ENCODE measurements at regions of chr1 and their contacts with region 1.

Region 1: GRCh38 chr1:40951943-40952743 is 27.4 kb upstream of the CTPS1 start:
- DNase-seq: no peak
- H3K4me3 ChIP-seq: no peak overlapping the region
- H3K27me3 ChIP-seq: no peaks in the 10 kb centered on the region
- CTCF ChIP-seq: peak; percentile 96

Region 2: GRCh38 chr1:40774266-40774998 is 177.7 kb before region 1 on chr1:
- CTCF ChIA-PET with region 1: interaction called, 22 read pairs
- POLR2A ChIA-PET with region 1: no interaction called
- DNase-seq: no peak
- H3K4me3 ChIP-seq: no peak overlapping the region
- H3K27me3 ChIP-seq: no peaks in the 10 kb centered on the region
- CTCF ChIP-seq: peak; percentile 79

Region 3: DNA sequence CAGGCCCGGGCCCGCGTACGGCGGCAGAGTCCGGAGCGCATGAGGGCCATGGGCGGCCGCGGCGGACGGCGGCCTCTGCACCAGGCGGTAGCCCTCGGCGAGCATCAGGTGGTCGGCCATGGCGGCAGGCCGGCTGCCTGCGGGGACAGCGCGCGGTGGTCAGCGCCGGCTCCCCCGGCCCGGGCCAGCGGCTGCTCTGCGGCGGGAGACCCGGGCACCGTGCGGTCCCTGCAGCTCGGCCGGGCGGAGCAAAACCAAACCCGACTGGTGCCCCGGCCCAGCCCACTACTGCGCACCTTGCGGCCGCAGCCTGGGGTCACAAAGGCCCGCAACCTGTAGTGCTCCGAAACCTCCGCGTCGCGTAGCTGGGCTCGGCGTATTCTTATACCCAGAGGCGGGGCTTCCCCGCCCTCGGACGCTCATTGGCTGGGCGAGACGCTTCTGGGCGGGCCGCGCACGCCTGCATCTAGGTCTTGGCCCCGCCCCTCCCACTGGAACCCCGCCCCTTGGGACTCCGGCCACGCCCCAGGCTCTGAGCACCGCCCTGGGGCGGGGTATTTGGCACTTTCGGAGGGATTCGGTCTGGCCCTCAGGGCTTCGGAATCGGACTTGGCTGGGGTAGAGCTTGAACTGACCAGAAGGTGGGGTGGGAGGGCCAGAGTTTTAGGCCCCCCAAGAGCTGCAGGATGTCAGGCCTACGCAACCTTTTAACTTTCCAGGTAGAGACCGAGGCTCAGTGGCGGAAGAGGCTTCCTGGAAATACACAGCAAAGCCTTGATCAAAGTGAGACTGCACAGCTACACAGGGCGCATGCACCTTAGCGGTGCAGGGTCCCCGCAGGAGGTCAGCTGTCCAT is 89.9 kb before region 1 on chr1 and contains the start of gene CITED4:
- CTCF ChIA-PET with region 1: interaction called, 476 read pairs
- POLR2A ChIA-PET with region 1: no interaction called
- DNase-seq: peak; percentile 39
- H3K4me3 ChIP-seq: peak within 1 kb of the TSS; percentile 54
- H3K27me3 ChIP-seq: no peaks in the 10 kb centered on the region; the same call in 1 of the 2 replicates
- CTCF ChIP-seq: 0 out of 2 replicates have a peak, but pooled peaks have one; percentile 17
- polyA plus RNA-seq, gene CITED4: 0.67 and 0.80 TPM in 2 replicates

Region 4: GRCh38 chr1:40965529-40965928 is 13.4 kb after region 1 on chr1:
- CTCF ChIA-PET with region 1: interaction called, 80 read pairs
- POLR2A ChIA-PET with region 1: interaction called, 4 read pairs
- DNase-seq: no peak
- H3K4me3 ChIP-seq: no peak overlapping the region
- H3K27me3 ChIP-seq: no peaks in the 10 kb centered on the region
- CTCF ChIP-seq: no peak

Region 5: DNA sequence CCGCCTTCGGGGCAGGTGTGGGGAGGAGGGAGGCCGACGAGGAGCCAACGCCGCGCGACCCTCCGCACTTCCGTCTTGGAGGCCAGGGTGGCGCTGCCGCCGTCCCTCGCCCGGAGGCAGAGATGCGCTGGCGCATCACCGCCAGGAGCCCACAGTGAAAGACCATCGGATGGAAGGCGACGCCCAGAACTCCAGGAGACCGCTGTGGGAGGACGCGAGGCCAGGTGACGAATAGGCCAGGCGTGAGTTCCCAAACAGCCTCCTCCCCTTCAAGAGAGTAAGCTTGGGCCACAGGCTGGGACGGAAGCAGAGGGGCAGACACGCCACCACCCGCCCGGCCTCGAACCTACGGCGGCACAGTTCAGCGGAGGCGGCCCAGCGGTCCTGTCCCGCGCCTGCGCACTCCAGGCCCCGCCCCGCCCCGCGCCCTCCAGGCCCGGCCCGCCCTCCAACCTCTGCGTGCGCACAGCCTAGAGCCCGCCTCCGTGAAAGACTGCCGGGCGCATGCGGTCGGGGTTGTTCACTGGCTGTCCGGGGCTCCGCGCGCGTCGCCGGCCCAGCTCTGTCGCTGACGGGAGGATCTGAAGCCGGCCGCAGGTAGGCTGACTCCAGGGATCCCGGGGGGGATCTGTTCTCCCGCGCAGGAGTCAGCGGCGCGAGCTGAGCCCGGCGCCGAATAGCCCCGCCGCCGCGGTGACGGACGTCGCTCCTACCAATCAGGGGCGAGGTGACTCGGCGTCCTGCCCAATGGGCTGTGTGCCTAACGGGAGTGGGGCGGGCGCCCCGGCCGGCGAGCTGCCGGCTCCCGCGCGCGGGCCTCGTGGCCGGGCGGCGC is 27.3 kb after region 1 on chr1 and contains the start of gene CTPS1:
- CTCF ChIA-PET with region 1: interaction called, 11 read pairs
- POLR2A ChIA-PET with region 1: no interaction called
- DNase-seq: peak; percentile 50
- H3K4me3 ChIP-seq: peak within 1 kb of the TSS; percentile 65
- H3K27me3 ChIP-seq: no peaks in the 10 kb centered on the region
- CTCF ChIP-seq: peak; percentile 37
- polyA plus RNA-seq, gene CTPS1: 45.1 and 53.0 TPM in 2 replicates

Region 6: GRCh38 chr1:41014871-41015270 is 62.7 kb after region 1 on chr1:
- CTCF ChIA-PET with region 1: interaction called, 10 read pairs
- POLR2A ChIA-PET with region 1: no interaction called
- DNase-seq: no peak
- H3K4me3 ChIP-seq: no peak overlapping the region
- H3K27me3 ChIP-seq: no peaks in the 10 kb centered on the region
- CTCF ChIP-seq: no peak